Aorta (tissue), 5 donors: ENCODE measurements at regions of chr7 and their contacts with region 1.

Region 1: GRCh38 chr7:156827587-156828203 is 65.3 kb downstream of the LMBR1 start:
- DNase-seq: no peak
- ATAC-seq: no peak
- H3K4me3 ChIP-seq: no peak overlapping the region
- H3K27ac ChIP-seq: no peak overlapping the region
- H3K4me1 ChIP-seq: no peaks in the 10 kb centered on the region
- H3K27me3 ChIP-seq: no peaks in the 10 kb centered on the region

Region 2: GRCh38 chr7:155796381-155797261 is 1031.1 kb before region 1 on chr7:
- intact Hi-C with region 1: loop called (anchors 10 kb)
- DNase-seq: peak; percentile 71 to 90
- ATAC-seq: peak; percentile 73
- H3K4me3 ChIP-seq: no peak overlapping the region
- H3K27ac ChIP-seq: no peak overlapping the region
- H3K4me1 ChIP-seq: no peaks in the 10 kb centered on the region
- H3K27me3 ChIP-seq: no peaks in the 10 kb centered on the region

Region 3: DNA sequence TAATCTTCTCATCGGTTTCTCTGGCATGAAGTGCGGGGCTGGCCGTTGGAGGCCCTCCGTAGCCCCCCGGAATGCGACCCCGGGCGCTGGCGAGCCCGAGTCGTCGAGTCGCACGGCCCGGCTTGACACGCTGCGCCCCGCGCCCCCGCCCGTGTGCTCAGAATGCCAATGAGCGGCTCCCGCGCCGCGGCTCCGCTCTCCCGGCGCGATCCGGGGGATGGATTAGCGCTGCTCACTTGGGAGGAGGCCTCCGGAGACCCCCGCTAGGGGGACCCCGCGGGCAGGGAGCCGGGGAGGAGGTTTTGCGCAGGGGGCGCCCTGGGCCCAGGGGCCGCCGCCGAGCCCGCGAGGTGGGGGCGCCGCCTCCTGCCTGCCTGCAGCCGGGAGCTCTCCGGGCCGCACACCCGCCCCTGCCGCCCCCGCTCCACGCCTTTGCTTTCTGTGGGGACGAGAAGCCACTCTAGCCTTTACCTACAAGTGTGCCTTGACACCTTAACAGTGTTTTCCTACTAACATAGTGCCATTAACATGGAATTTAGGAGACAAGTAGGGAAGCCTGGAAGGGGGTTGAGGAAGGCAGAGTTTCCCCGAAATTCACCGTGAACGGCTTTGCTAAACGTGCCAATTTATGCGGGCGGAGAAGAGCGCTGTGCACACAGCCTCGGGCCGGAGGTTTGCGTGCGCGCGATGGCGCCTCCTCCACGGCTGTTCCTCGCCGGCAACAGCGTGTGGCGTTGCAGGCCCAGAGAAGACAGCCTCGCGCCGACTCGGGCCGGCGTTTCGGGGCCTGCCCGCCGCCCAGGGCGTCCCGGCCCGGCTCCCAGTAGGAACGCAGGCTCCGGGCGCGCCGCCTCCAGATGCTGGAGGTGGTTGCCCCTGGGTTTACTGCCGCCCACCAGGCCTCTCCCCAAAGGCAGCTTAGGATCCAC is 1022.5 kb before region 1 on chr7:
- intact Hi-C with region 1: loop called in 1 of 2 experiments (anchors 10 kb)
- DNase-seq: peak in 1 of 2 donors; percentile 44
- ATAC-seq: peak; percentile 27
- H3K4me3 ChIP-seq: peak overlapping the region in 1 of 2 donors; percentile 10
- H3K27ac ChIP-seq: no peak overlapping the region
- H3K4me1 ChIP-seq: no peaks in the 10 kb centered on the region
- H3K27me3 ChIP-seq: no peaks in the 10 kb centered on the region

Region 4: GRCh38 chr7:157253850-157254249 is 426.2 kb after region 1 on chr7:
- intact Hi-C with region 1: no loop called
- DNase-seq: peak in 1 of 2 donors; percentile 85
- ATAC-seq: no peak
- H3K4me3 ChIP-seq: no peak overlapping the region
- H3K27ac ChIP-seq: no peak overlapping the region
- H3K4me1 ChIP-seq: no peaks in the 10 kb centered on the region
- H3K27me3 ChIP-seq: no peaks in the 10 kb centered on the region